Activated T-helper 1 cell treated with anti-CD3 and anti-CD28 coated beads, Interleukin-12 subunit alpha, Interleukin-12 subunit beta, Interleukin-2, Interleukin-4 antibody, amounts not matched to agents 30 ng/mL and 10 ng/mL and 1 ng/mL, durations not matched to agents 14 hours and 24 hours and 36 hours (primary cell): ENCODE measurements at regions of chrX and their contacts with region 1.

Region 1: GRCh38 chrX:54182864-54183608 is at the start of gene FAM120C:
- DNase-seq: peak; percentile 38
- H3K4me3 Mint-ChIP-seq: peak within 1 kb of the TSS; percentile 90
- H3K27ac Mint-ChIP-seq: peak within 1 kb of the TSS; percentile 91
- H3K4me1 Mint-ChIP-seq: peaks cover 40% of the 10 kb centered on the region
- H3K27me3 Mint-ChIP-seq: no peaks in the 10 kb centered on the region
- total RNA-seq, gene FAM120C: 10.4 and 11.8 TPM in 2 replicates

Region 2: GRCh38 chrX:52995135-52996020 is 1187.7 kb before region 1 on chrX:
- intact Hi-C with region 1: loop called (anchors 5 kb)
- DNase-seq: peak; percentile 88
- H3K4me3 Mint-ChIP-seq: peak overlapping the region; percentile 89
- H3K27ac Mint-ChIP-seq: peak overlapping the region; percentile 95
- H3K4me1 Mint-ChIP-seq: peaks cover 21% of the 10 kb centered on the region
- H3K27me3 Mint-ChIP-seq: no peaks in the 10 kb centered on the region

Region 3: DNA sequence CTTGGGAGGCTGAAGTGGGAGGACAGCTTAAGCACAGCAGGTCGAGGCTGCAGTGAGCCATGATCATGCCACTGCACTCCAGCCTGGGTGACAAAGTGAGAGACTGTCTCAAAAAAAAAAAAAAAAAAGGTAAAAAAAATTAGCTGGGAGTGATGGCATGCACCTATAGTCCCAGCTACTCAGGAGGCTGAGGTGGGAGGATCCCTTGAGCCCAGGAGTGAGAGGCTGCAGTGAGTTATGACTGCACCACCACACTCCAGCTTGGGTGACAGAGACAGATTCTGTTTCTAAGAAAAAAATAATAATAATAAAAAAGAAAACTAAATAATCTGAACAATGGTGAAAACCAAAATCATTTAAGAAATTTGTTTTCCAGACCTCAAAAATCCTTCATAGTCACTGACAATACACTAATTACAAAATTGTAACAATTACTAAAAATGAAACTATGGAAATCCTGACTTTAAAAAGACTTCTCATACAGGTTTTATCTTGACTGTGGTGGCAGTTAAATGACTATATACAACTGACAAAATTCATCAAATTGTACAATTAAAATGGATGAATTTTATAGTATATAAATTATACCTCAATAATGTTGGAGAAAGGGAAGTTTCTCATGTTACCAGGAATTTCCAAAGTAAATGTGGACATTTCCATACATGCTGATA is 170.1 kb before region 1 on chrX:
- intact Hi-C with region 1: no loop called
- DNase-seq: no peak
- H3K4me3 Mint-ChIP-seq: no peak overlapping the region
- H3K27ac Mint-ChIP-seq: no peak overlapping the region
- H3K4me1 Mint-ChIP-seq: peaks cover 8% of the 10 kb centered on the region
- H3K27me3 Mint-ChIP-seq: no peaks in the 10 kb centered on the region

Region 4: DNA sequence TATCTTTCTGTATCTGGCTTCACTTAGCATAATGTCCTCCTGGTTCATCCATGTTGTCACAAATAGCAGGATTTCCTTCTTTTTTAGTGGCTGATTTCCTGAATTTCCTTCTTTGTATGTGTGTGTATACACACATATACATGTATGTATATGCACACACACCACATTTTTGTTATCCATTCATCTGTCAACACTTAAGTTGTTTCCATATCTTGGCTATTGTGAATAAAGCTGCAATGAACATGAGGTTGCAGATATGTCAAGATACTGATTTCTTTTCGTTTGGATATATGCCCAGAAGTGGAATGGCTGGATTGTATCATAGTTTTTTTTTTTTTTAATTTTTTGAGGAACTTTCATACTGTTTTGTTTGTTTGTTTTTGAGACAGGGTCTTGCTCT is 98.6 kb after region 1 on chrX:
- intact Hi-C with region 1: no loop called
- DNase-seq: no peak
- H3K4me3 Mint-ChIP-seq: no peak overlapping the region
- H3K27ac Mint-ChIP-seq: no peak overlapping the region
- H3K4me1 Mint-ChIP-seq: no peaks in the 10 kb centered on the region
- H3K27me3 Mint-ChIP-seq: no peaks in the 10 kb centered on the region

Region 5: GRCh38 chrX:54439967-54440871 is 257.2 kb after region 1 on chrX and contains the start of gene TSR2:
- intact Hi-C with region 1: loop called (anchors 1 kb)
- DNase-seq: peak; percentile 75
- H3K4me3 Mint-ChIP-seq: peak within 1 kb of the TSS; percentile 96
- H3K27ac Mint-ChIP-seq: peak within 1 kb of the TSS; percentile 83
- H3K4me1 Mint-ChIP-seq: peaks cover 27% of the 10 kb centered on the region
- H3K27me3 Mint-ChIP-seq: no peaks in the 10 kb centered on the region
- total RNA-seq, gene TSR2: 43.6 and 44.1 TPM in 2 replicates

Region 6: GRCh38 chrX:54639346-54640102 is 456.5 kb after region 1 on chrX:
- intact Hi-C with region 1: loop called (anchors 1 kb)
- DNase-seq: peak; percentile 87
- H3K4me3 Mint-ChIP-seq: peak overlapping the region; percentile 93
- H3K27ac Mint-ChIP-seq: peak overlapping the region; percentile 99
- H3K4me1 Mint-ChIP-seq: peaks cover 10% of the 10 kb centered on the region
- H3K27me3 Mint-ChIP-seq: no peaks in the 10 kb centered on the region

Region 7: GRCh38 chrX:54825716-54826438 is 642.8 kb after region 1 on chrX:
- intact Hi-C with region 1: no loop called
- DNase-seq: no peak
- H3K4me3 Mint-ChIP-seq: no peak overlapping the region
- H3K27ac Mint-ChIP-seq: no peak overlapping the region
- H3K4me1 Mint-ChIP-seq: no peaks in the 10 kb centered on the region
- H3K27me3 Mint-ChIP-seq: peaks cover 4% of the 10 kb centered on the region

Region 8: DNA sequence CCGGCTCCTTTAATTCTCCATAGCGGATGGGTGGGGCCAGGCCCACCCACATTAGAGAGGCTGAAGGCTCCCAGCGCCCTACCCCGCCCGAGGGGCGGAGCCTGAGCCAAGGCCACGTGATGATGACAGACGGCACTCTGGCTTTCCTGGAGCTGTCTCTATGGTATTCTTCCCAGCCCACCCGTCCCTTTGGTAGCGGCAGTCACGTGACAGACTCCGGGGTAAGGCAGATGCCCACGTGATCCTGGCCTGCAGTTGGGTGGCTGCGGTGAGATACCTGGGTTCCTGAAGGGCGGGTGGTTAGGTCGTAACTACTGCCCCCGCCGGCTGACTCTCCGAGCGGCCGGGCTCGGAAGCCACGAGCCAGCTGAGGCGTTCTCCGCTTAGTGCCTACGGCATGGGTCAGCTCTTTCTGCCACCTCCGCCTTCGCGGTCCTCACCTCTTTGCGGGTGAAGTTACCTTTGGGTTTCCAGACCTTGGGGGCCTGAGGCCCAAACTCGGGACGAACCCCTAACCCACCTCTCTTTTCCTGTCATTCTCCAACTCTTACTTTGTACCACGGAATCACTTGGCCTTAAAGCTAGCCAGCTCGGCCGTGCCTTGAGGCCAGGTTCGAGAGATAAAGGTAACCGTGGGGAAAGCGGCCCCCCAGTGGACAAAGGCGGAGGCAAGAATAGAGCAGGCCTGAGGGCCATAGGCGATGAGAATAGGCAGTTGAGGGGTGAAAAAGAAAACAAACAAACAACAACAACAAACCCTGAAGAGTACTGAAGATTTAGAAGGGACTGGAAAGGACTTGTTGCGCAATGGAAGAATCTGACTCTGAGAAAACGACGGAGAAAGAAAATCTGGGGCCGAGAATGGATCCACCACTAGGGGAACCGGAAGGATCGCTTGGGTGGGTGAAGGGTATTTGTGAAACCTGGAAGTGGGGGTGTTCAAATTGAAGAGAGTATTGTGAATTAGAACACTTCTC is 1534.8 kb after region 1 on chrX and contains the start of gene RRAGB:
- intact Hi-C with region 1: loop called (anchors 5 kb)
- DNase-seq: peak; percentile 84
- H3K4me3 Mint-ChIP-seq: peak within 1 kb of the TSS; percentile 89
- H3K27ac Mint-ChIP-seq: peak within 1 kb of the TSS; percentile 73
- H3K4me1 Mint-ChIP-seq: peaks cover 36% of the 10 kb centered on the region
- H3K27me3 Mint-ChIP-seq: no peaks in the 10 kb centered on the region
- total RNA-seq, gene RRAGB: 4.4 and 6.1 TPM in 2 replicates